GM10248 (cell line): ENCODE measurements at regions of chr9 and their contacts with region 1.

Region 1: GRCh38 chr9:113492343-113493212 is 29.1 kb downstream of the RGS3 start:
- DNase-seq: no peak
- CTCF ChIP-seq: no peak

Region 2: GRCh38 chr9:113476511-113476916 is 16.1 kb before region 1 on chr9:
- CTCF ChIA-PET with region 1: interaction called, 10 read pairs
- POLR2A ChIA-PET with region 1: no interaction called
- DNase-seq: no peak
- CTCF ChIP-seq: no peak

Region 3: GRCh38 chr9:113523421-113524236 is 31.1 kb after region 1 on chr9:
- CTCF ChIA-PET with region 1: no interaction called
- POLR2A ChIA-PET with region 1: no interaction called
- DNase-seq: peak; percentile 80
- CTCF ChIP-seq: no peak

Region 4: DNA sequence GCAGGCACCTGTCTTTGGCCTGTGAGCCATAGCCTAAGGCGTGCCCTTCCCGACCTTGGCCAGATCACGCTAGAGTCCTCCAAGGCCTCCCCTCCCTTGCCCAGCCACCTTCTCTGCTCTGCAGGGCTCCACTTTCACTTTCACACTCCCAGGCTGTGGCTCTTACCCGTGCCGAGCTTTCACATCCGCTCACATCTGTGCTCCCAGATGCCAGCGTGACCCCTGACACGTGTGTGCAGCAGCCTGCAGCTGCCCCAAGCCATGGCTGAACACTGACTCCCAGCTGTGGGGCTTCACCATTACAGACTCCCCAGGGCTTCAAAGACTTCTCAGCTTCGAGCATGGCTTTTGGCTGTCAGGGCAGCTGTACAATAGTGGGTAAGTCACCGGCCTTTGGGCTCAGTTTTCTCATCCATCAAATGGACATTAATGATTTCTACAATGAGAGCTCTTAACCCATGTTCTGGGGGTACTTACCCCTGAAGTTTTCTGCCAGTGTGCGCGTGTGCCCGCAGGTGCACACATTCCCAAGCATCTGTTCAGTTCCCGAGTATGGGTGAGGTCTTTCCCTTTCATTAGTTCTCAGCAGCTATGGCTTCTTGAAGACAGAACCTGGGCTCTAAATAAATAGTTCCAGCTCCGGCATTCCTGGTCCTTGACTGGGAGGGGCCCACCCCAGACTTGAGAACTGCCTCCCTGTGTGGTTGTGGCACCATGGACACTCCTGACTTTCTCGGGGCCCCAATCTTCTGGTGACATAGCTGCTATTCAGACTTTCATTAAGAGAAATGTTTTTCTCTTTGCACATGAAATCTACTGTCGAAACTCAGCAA is 89.5 kb after region 1 on chr9:
- CTCF ChIA-PET with region 1: no interaction called
- POLR2A ChIA-PET with region 1: no interaction called
- DNase-seq: peak; percentile 89
- CTCF ChIP-seq: peak; percentile 61

Region 5: GRCh38 chr9:113687680-113688371 is 195.2 kb after region 1 on chr9:
- CTCF ChIA-PET with region 1: no interaction called
- POLR2A ChIA-PET with region 1: no interaction called
- DNase-seq: no peak
- CTCF ChIP-seq: no peak